Dendritic cell treated with granulocyte-macrophage colony-stimulating factor and Interleukin-4, amounts not matched to agents 40 ng/mL and 50 ng/mL, for 4 days (primary cell): ENCODE measurements at regions of chr3 and their contacts with region 1.

Region 1: DNA sequence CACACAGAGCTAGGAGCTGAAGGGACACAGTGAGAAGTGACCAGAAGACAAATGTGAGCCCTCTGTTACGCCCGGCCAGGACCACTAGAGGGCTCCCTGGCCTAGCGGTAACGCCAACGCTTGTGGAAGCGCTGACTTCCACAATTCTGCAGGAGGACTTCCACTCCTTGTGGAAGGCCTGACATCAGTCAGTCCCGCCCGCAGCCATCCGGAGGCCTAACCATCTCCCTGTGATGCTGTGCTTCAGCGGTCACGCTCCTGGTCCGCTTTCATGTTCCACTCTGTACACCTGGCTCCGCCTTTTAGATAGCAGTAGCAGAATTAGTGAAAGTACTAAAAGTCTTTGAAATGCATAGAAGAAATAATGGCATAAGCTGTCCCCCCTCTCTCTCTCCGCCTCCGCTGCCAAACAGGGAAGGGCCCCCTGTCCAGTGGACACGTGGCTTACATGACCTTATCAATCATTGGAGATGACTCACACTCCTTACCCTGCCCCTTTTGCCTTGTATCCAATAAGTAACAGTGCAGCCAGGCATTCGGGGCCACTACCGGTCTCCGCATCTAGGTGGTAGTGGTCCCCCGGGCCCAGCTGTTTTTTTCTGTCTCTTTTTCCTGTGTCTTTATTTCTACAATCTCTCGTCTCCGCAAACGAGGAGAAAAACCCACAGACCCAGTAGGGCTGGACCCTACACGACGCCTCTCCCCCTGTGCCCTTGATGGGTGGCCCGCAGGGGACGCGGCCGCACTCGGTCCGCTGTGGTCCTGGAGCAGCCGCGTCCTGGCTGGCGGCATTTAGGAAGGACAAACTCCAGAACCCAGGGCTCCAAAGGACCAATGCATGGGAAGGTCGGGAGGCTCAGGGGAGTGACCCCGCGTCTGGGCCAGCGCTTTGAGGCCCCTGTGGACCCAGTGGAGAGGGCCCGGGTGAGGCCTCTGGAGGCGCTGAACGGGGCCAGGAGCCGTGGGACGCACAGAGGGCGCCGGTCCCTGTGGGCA is 27.0 kb upstream of the RPL32 start:
- H3K4me3 Mint-ChIP-seq: peak overlapping the region; percentile 57
- H3K27ac Mint-ChIP-seq: peak overlapping the region; percentile 80
- H3K4me1 Mint-ChIP-seq: peaks cover 19% of the 10 kb centered on the region
- H3K27me3 Mint-ChIP-seq: peaks cover 48% of the 10 kb centered on the region

Region 2: GRCh38 chr3:12934431-12934830 is 66.1 kb after region 1 on chr3:
- intact Hi-C with region 1: no loop called
- H3K4me3 Mint-ChIP-seq: no peak overlapping the region
- H3K27ac Mint-ChIP-seq: no peak overlapping the region
- H3K4me1 Mint-ChIP-seq: peaks cover 26% of the 10 kb centered on the region
- H3K27me3 Mint-ChIP-seq: no peaks in the 10 kb centered on the region

Region 3: DNA sequence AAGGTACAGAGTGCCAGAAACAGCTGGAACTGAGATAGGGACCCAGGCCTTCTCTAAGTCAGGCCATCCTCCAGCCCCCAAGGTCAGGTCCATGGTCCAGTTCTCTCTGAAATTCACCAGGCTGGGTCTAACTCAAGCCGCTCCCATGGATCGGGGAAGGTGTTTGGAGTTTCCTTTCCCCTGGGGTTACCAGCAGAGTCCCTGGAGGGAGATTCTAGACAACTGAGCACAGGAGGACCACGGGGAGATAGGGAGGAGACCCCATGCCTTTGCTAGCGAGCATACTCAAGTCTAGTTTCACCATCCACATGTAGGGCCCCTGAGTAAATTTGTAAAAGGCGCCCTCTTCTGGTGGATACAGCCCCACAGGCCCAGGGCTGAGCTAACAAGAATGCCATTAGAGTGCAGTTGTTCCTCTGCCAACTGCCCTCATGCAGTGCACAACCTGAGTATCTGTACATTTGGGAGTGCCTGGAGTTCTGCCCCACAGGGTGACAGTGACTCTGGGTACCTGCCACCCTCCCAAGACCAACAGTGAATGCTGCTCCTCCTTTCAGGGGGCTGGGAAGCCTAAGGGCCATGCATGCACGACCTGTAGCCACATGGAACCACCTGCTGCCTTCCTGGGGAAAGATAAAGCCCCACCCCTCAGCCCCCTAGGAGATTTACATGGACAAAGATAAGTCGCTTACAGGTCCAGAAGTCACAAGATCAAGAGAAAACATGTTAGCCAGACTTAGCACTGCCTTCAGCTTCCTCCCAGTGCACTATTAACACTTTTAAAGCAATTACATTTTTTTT is 115.9 kb after region 1 on chr3:
- intact Hi-C with region 1: loop called (anchors 10 kb)
- H3K4me3 Mint-ChIP-seq: no peak overlapping the region
- H3K27ac Mint-ChIP-seq: no peak overlapping the region
- H3K4me1 Mint-ChIP-seq: peaks cover 54% of the 10 kb centered on the region
- H3K27me3 Mint-ChIP-seq: no peaks in the 10 kb centered on the region